PC-3 (cell line): ENCODE measurements at regions of chr11 and their contacts with region 1.

Region 1: GRCh38 chr11:123580557-123581275 is 73.7 kb downstream of the SCN3B start:
- DNase-seq: peak; percentile 86
- ATAC-seq: peak; percentile 68
- H3K4me3 ChIP-seq: no peak overlapping the region
- H3K27ac ChIP-seq: no peak overlapping the region
- H3K4me1 ChIP-seq: 0 out of 2 replicates have a peak, but pooled peaks cover 3% of the 10 kb centered on the region
- H3K27me3 ChIP-seq: no peaks in the 10 kb centered on the region
- CTCF ChIP-seq: peak; percentile 96

Region 2: GRCh38 chr11:123511037-123511870 is 69.5 kb before region 1 on chr11:
- CTCF ChIA-PET with region 1: no interaction called
- POLR2A ChIA-PET with region 1: no interaction called
- intact Hi-C with region 1: loop called (anchors 1 kb)
- DNase-seq: peak; percentile 96
- ATAC-seq: peak; percentile 99
- H3K4me3 ChIP-seq: no peak overlapping the region
- H3K27ac ChIP-seq: no peak overlapping the region
- H3K4me1 ChIP-seq: peaks cover 10% of the 10 kb centered on the region; the same call in 1 of the 2 replicates
- H3K27me3 ChIP-seq: no peaks in the 10 kb centered on the region
- CTCF ChIP-seq: peak; percentile 96